Motor neuron (in vitro differentiated cells): ENCODE measurements at regions of chr7 and their contacts with region 1.

Region 1: DNA sequence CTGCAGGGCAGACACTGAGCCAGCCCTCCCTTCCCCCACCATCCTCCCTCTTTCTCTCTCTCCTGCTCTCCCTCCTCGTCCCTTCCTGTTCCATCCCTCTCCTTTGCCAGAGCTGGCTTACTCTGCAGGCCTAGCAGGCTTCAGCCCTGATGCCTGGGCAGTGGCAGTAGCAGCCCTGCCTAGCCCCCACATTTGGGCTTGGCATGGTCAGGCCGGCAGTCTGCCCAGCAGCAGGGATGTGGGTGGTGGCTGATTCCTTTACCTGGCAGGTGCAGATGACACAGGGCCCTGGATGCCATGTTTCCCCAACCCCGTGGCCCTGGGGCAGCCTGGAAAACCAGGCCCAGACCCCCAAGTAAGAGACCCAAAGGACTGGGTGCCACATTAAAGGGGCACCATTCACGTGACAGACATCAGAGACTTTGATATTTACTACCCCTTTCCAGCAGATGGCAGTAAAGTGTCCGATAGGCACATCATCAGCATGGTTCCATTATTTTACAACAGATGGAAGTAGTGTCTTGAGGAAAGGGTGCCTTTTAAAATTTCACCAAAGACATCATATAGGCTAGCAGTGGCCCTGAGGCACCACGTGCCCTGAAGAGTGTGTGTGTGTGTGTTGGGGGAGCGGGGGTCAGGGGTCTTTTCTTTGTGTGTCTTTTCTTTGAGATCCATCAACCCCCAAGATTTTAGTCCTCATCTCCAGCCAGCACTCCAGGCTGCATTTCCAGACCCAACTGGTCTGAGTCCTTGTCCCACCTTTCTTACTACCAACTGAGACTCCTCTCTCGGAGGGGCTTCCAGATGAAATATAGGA is 5.9 kb downstream of the KCP start:
- ATAC-seq: peak in 6 of 8 experiments; percentile 17 to 83 (median 30)
- H3K4me3 ChIP-seq: no peak overlapping the region
- H3K27ac ChIP-seq: no peak overlapping the region
- H3K4me1 ChIP-seq: peaks cover 0 to 7% of the 10 kb centered on the region in 2 donors

Region 2: DNA sequence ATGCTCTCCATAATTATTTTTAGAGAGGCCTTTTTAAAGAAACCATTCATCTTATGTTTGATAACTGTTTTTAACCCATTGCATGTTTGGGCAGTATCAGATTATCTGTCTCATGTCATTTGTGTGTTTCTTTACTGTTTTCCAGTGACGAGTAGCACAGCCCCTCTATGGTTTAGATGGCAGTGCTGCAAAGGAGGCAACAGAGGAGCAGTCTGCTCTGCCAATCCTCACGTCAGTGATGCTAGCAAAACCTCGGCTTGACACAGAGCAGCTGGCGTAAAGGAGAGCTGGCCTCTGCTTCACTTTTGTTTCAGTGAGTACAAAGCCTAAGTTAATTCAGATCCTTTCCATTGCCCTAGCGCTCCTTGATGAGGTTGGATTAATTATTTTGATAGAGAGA is 312.9 kb before region 1 on chr7:
- in situ Hi-C with region 1: no loop called
- ATAC-seq: no peak
- H3K4me3 ChIP-seq: no peak overlapping the region
- H3K27ac ChIP-seq: no peak overlapping the region
- H3K4me1 ChIP-seq: no peaks in the 10 kb centered on the region

Region 3: DNA sequence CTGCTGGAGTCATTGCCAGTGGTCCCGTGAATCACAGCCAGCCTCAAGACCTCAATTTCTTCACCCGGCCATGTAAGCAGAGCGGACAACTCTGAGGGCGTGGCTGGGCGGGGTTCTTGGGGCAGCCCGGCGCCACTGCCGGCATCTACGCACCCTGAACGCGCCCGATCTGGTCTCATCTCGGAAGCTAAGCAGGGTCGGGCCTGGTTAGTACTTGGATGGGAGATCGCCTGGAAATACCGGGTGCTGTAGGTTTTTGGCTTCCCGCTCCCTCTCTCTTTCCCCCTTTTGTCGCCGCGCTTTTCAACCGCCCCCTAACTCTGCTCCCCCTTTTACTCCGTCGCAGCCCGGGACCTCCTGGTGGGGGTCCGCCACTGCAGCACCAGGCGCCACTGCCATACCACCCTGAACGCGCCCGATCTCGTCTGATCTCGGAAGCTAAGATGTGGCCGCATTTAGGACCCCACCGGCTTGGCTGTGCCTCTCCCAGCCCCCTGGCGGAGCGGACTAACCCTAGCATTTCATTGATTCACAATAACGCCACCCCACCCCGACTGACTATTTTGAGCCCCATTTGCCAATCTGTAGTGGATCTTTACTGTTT is 207.2 kb before region 1 on chr7:
- in situ Hi-C with region 1: no loop called
- ATAC-seq: peak; percentile 39 to 91 (median 74)
- H3K4me3 ChIP-seq: peak overlapping the region in 3 of 5 donors; percentile 2 to 29 (median 27)
- H3K27ac ChIP-seq: no peak overlapping the region
- H3K4me1 ChIP-seq: no peaks in the 10 kb centered on the region

Region 4: GRCh38 chr7:129091484-129092002 is 187.0 kb after region 1 on chr7:
- in situ Hi-C with region 1: loop called in 1 of 9 experiments (anchors 25 kb)
- ATAC-seq: peak; percentile 83 to 100 (median 94)
- H3K4me3 ChIP-seq: no peak overlapping the region
- H3K27ac ChIP-seq: no peak overlapping the region
- H3K4me1 ChIP-seq: no peaks in the 10 kb centered on the region